ENCODE measurements at regions of chr18 and their contacts with region 1.

Region 1: DNA sequence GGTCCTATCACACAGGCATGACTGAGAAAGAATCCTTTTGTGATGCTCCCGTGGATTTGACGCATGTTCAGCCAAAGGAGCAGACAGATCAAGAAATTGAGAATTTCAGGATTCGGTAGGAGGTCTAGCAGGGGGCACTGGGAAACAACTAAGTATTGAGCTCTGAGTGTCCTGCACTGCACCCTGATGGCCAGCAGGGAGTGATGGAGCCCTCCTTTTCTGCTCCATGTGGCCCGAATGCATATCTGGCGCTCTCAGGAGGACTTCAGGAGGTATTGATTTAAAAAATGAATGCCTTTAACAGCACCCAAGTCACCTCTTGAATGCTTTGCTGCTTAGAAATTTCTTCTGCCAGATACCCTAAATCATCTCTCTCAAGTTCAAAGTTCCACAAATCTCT is 58.0 kb downstream of the ZNF519 start:
- DNase-seq: peak; percentile 38
- ATAC-seq: peak; percentile 97
- H3K4me3 Mint-ChIP-seq: no peak overlapping the region
- H3K27ac Mint-ChIP-seq: no peak overlapping the region
- H3K4me1 Mint-ChIP-seq: no peaks in the 10 kb centered on the region
- H3K27me3 Mint-ChIP-seq: no peaks in the 10 kb centered on the region
- CTCF ChIP-seq: peak; percentile 30; the same call in 1 of the 2 replicates

Region 2: DNA sequence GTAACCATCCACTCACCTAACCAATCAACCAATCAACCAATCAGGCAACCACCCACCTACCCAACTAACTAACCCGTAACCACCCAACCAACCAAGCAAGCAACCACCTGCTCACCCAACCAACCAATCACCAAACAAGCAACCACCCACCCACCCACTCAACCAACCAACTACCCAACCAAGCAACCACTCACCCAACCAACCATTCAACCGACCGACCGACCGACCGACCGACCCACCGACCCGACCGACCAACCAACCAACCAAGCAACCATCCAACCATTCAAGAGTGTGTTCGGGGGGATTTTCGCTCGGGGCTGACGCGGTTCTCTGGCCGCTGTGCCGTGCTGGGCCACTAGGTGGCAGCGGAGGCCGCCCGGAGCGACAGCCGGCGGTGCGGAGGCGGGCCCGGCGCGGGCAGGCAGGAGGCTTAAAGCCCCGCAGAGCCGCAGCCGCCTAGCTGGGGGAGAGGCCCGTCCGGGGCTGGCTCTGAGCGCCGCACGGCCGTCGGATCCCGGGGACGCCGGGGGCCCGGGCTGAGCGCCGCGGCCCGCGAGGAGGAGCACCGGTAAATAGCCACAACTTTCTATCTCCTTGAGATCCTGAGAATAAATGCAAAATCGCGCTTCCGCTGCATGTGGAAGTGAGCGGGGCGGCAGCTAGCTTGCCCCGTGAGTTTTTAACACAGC is 250.3 kb before region 1 on chr18 and contains the start of gene MC5R:
- CTCF ChIA-PET with region 1: interaction called, 19 read pairs
- POLR2A ChIA-PET with region 1: interaction called, 4 read pairs
- DNase-seq: peak; percentile 82
- ATAC-seq: peak; percentile 96
- H3K4me3 Mint-ChIP-seq: peak within 1 kb of the TSS; percentile 58
- H3K27ac Mint-ChIP-seq: no peak within 1 kb of the TSS
- H3K4me1 Mint-ChIP-seq: no peaks in the 10 kb centered on the region
- H3K27me3 Mint-ChIP-seq: peaks cover 20% of the 10 kb centered on the region
- CTCF ChIP-seq: peak; percentile 86
- total RNA-seq, gene MC5R: 0.14 to 0.27 TPM (median 0.15 TPM) in 3 replicates

Region 3: DNA sequence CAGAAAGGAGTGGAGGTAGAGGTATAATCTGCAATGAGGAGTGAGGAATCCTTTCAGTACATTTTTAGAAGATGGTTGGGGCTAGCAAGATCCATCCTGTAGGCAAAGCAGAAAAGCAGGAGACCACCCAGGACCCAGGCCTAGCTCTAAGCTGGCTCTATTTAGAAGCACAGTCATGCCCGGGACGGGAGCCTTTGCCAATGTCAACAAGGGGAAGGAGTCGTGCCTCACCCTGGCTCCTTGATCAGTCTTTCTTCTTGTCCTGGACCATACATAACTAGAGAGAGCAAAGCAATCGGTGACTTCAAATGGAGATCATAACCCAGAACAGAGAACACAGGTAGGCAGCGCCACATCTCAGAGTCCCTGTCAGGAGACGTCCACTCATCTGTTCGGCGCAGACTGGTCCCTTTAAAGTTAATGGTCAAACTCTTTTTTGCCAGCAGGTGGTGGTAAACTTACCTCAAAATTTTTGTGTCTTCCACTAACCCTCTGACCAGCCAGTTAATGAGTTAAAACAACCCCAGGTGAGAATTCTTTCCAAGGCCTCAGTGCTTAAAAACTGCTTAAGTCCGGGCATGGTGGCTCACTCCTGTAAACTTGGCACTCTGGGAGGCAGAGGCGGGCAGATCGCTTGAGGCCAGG is 242.2 kb before region 1 on chr18:
- CTCF ChIA-PET with region 1: interaction called, 14 read pairs
- POLR2A ChIA-PET with region 1: no interaction called
- DNase-seq: no peak
- ATAC-seq: peak; percentile 80
- H3K4me3 Mint-ChIP-seq: no peak overlapping the region
- H3K27ac Mint-ChIP-seq: no peak overlapping the region
- H3K4me1 Mint-ChIP-seq: peaks cover 15% of the 10 kb centered on the region; the same call in 1 of the 2 replicates
- H3K27me3 Mint-ChIP-seq: no peaks in the 10 kb centered on the region
- CTCF ChIP-seq: no peak

Region 4: DNA sequence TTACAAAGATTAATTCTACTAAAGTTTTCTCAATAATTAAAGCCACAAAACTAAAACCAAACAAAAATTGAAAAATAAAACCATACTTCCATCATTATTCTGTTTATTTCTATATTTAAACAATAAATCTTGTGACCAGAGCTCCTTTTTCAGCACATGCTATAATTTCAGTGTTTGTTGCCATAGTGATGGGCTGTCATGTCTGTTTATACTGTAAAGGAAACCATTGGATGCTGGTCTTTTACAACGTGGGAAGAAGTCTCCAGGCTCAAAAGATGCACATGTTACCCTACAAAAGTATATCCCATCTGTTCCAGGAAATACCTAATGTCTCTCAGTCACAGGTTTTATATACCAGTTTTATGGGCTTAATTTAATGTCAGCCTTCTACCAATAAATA is 58.8 kb before region 1 on chr18:
- CTCF ChIA-PET with region 1: no interaction called
- POLR2A ChIA-PET with region 1: no interaction called
- DNase-seq: no peak
- ATAC-seq: no peak
- H3K4me3 Mint-ChIP-seq: no peak overlapping the region
- H3K27ac Mint-ChIP-seq: no peak overlapping the region
- H3K4me1 Mint-ChIP-seq: no peaks in the 10 kb centered on the region
- H3K27me3 Mint-ChIP-seq: peaks cover 4% of the 10 kb centered on the region; the same call in 1 of the 2 replicates
- CTCF ChIP-seq: no peak

Region 5: GRCh38 chr18:14086458-14087231 is 12.5 kb after region 1 on chr18:
- CTCF ChIA-PET with region 1: interaction called, 14 read pairs
- POLR2A ChIA-PET with region 1: no interaction called
- DNase-seq: peak; percentile 47
- ATAC-seq: peak; percentile 88
- H3K4me3 Mint-ChIP-seq: no peak overlapping the region
- H3K27ac Mint-ChIP-seq: no peak overlapping the region
- H3K4me1 Mint-ChIP-seq: peaks cover 10% of the 10 kb centered on the region
- H3K27me3 Mint-ChIP-seq: no peaks in the 10 kb centered on the region
- CTCF ChIP-seq: peak; percentile 66

Region 6: DNA sequence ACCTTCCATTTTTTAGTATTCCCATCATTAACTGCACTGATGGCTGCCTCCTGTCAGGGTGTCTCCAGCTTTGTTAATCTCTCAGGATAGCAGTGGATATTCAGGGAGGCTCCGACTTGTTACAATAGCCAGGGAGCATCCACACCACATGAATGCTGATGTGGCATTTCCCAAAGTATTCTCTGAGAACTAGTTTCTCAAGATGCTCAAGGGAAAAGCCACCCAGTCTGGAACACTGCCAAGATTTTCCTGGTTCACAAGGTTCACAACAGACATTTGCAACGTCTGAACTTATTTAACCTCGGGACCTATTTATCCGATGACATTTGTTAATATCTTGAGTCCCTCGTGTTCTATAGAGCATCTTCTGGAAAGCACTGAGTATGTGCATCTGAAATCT is 24.3 kb after region 1 on chr18:
- CTCF ChIA-PET with region 1: no interaction called
- POLR2A ChIA-PET with region 1: no interaction called
- DNase-seq: no peak
- ATAC-seq: no peak
- H3K4me3 Mint-ChIP-seq: no peak overlapping the region
- H3K27ac Mint-ChIP-seq: no peak overlapping the region
- H3K4me1 Mint-ChIP-seq: peaks cover 12% of the 10 kb centered on the region
- H3K27me3 Mint-ChIP-seq: no peaks in the 10 kb centered on the region
- CTCF ChIP-seq: no peak

Measured in WTC11 (cell line).